Heart left ventricle (tissue), 16 donors: ENCODE measurements at regions of chr11 and their contacts with region 1.

Region 1: GRCh38 chr11:12411806-12412727 is 34.7 kb downstream of the PARVA start:
- DNase-seq: peak in 4 of 5 donors; percentile 59 to 74 (median 72)
- ATAC-seq: peak; percentile 81 to 88 (median 84)
- H3K4me3 ChIP-seq: no peak overlapping the region
- H3K27ac ChIP-seq: peak overlapping the region in 9 of 12 donors; percentile 5 to 98 (median 31)
- H3K4me1 ChIP-seq: peaks cover 0 to 77% (median 44%) of the 10 kb centered on the region in 12 donors
- H3K27me3 ChIP-seq: no peaks in the 10 kb centered on the region
- CTCF ChIP-seq: peak; percentile 57 to 85 (median 78)
- POLR2A ChIP-seq: no peak

Region 2: GRCh38 chr11:12377824-12378593 is 34.1 kb before region 1 on chr11:
- intact Hi-C with region 1: loop called in 1 of 10 experiments (anchors 5 kb)
- DNase-seq: peak; percentile 65 to 85 (median 77)
- ATAC-seq: peak; percentile 21 to 82 (median 66)
- H3K4me3 ChIP-seq: peak overlapping the region; percentile 59 to 98 (median 72)
- H3K27ac ChIP-seq: peak overlapping the region; percentile 93 to 99 (median 97)
- H3K4me1 ChIP-seq: peaks cover 1 to 68% (median 37%) of the 10 kb centered on the region in 12 donors
- H3K27me3 ChIP-seq: peaks cover 0 to 11% (median 0%) of the 10 kb centered on the region in 9 donors
- CTCF ChIP-seq: peak in 8 of 12 donors; percentile 14 to 51 (median 28)
- POLR2A ChIP-seq: no peak

Region 3: GRCh38 chr11:12485328-12485727 is 73.3 kb after region 1 on chr11:
- intact Hi-C with region 1: loop called in 3 of 10 experiments (anchors 5 to 10 kb)
- DNase-seq: no peak
- ATAC-seq: no peak
- H3K4me3 ChIP-seq: no peak overlapping the region
- H3K27ac ChIP-seq: no peak overlapping the region
- H3K4me1 ChIP-seq: peaks cover 0 to 24% (median 9%) of the 10 kb centered on the region in 12 donors
- H3K27me3 ChIP-seq: no peaks in the 10 kb centered on the region
- CTCF ChIP-seq: peak in 8 of 12 donors; percentile 9 to 44 (median 34)
- POLR2A ChIP-seq: no peak

Region 4: DNA sequence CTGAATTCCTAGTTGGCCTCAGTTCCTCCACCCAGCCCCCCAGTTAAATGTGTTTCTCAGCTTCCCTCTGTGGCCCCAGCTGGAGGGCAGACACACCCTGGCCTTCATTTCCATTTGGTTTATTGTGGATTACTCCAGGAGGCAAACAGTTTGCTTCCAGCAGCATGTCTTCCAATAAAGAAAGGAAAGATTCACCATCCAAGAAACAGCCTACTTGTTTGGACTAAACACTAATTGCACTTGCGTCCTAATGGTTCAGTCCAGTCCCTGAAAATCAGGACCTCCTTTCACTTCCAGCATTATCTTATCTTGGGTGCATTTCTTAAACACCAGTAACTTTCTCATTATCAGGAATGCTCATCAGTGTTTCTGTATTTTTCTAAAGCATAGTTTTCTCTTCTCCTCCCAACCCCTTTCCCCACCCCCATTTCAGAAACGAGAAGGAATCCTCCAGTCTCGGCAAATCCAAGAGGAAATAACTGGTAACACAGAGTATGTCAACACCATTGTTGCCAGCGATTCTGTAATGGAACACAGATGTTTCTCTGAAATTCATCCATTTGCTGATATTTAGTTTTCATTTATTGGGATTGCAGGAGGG is 96.2 kb after region 1 on chr11:
- intact Hi-C with region 1: loop called in 1 of 10 experiments (anchors 10 kb)
- DNase-seq: peak in 2 of 5 donors; percentile 18 to 60
- ATAC-seq: peak; percentile 42 to 73 (median 60)
- H3K4me3 ChIP-seq: no peak overlapping the region
- H3K27ac ChIP-seq: peak overlapping the region in 7 of 12 donors; percentile 8 to 69 (median 22)
- H3K4me1 ChIP-seq: peaks cover 0 to 31% (median 5%) of the 10 kb centered on the region in 12 donors
- H3K27me3 ChIP-seq: no peaks in the 10 kb centered on the region
- CTCF ChIP-seq: no peak
- POLR2A ChIP-seq: no peak

Region 5: DNA sequence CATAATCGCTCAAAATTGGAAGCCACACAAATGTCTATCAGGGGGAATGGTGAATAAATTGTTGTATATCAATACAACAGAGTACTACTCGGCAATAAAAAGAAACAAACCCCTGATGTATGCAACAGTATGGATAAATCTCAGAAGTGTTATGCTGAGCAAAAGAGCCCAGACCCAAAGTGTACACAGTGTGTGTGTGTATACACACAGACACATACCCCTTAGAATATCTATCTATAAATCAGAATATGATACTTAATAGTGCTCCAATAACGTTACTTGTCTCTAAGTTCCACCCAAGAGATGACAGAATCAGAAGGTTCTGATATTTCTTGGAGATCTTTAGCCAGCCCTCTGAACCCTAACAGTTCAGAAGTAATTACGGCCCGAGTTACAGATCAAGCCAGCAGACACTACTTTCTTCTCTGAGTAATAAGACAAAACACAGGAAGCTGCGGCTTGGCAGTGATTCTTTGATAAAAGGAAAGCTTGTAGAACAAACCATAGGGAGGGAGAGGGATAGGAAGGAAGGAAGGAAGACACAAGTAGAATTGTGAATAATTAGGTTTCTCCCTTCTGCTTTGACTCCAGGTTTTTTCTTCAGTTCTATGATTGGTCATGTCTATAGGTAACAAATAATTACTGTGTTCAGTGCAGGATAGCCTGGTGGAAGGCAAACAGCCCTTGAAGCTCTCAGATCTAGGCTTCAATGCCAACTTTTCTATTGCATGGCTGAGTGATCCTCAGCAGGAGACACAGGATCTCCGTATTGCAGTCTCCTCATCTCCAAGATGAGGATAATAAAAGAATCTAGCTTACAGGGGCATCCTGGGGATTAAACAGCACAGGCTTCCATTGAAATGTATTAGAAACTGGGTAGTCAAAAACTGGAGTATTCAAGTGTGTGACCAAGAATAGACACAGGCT is 186.5 kb after region 1 on chr11:
- intact Hi-C with region 1: no loop called
- DNase-seq: no peak
- ATAC-seq: no peak
- H3K4me3 ChIP-seq: no peak overlapping the region
- H3K27ac ChIP-seq: no peak overlapping the region
- H3K4me1 ChIP-seq: peaks cover 0 to 28% (median 15%) of the 10 kb centered on the region in 12 donors
- H3K27me3 ChIP-seq: no peaks in the 10 kb centered on the region
- CTCF ChIP-seq: no peak
- POLR2A ChIP-seq: no peak

Region 6: DNA sequence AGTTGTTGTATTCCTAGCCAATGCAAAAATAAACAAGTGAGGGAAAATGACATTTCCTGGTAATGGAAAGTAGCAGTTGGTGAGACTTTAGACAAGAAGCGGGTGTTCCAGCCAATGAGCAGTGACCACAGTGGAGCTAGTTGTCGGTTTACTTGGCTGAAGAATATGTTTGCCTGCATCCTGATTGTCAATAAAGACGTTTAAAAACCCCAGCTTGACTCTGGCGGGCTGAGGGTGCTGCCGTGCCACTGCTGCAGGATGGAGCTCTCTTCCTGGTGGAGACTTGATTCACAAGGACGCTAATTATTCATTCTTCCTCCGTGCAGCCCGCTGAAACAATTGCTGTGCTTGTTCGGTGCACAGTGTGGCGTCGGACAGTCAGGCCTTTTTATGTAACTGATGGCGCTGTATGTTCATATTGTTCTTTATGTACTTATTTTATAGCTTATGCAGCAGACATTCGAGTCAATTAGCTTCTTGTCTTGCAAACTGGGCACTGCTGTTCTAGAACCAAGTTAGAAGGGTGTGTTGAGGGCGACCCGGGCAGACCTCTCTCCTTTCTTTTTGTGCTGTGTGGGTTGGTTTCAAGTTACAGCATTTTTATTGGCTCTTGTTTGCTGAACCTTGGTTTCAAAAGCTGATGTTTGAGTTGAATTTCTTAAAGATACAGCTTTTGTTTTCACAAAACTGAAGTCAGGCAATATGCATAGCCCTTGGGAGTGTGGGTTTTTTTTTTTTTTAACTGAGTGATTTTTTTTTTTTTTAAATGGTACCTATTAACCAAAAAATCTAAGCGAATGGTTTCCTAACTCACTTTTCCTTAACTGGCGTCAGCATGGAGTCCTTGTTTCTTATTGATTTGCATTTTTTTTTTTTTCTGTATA is 416.1 kb after region 1 on chr11:
- intact Hi-C with region 1: loop called in 1 of 10 experiments (anchors 5 kb)
- DNase-seq: peak in 2 of 5 donors; percentile 38 to 39
- ATAC-seq: peak; percentile 63 to 87 (median 74)
- H3K4me3 ChIP-seq: peak overlapping the region in 11 of 12 donors; percentile 16 to 61 (median 46)
- H3K27ac ChIP-seq: peak overlapping the region in 11 of 12 donors; percentile 12 to 73 (median 53)
- H3K4me1 ChIP-seq: peaks cover 0 to 55% (median 27%) of the 10 kb centered on the region in 12 donors
- H3K27me3 ChIP-seq: no peaks in the 10 kb centered on the region
- CTCF ChIP-seq: no peak
- POLR2A ChIP-seq: no peak